ENCODE measurements at regions of chr18 and their contacts with region 1.

Region 1: GRCh38 chr18:62637807-62638687 is 77.3 kb upstream of the PHLPP1 start:
- DNase-seq: peak; percentile 23 to 81
- H3K4me3 ChIP-seq: no peak overlapping the region
- H3K27ac ChIP-seq: no peak overlapping the region
- H3K4me1 ChIP-seq: no peaks in the 10 kb centered on the region
- H3K27me3 ChIP-seq: no peaks in the 10 kb centered on the region
- CTCF ChIP-seq: peak; percentile 79 to 91 (median 88)
- EP300 ChIP-seq: no peak
- POLR2A ChIP-seq: no peak
- RAD21 ChIP-seq: peak; percentile 77 to 83

Region 2: DNA sequence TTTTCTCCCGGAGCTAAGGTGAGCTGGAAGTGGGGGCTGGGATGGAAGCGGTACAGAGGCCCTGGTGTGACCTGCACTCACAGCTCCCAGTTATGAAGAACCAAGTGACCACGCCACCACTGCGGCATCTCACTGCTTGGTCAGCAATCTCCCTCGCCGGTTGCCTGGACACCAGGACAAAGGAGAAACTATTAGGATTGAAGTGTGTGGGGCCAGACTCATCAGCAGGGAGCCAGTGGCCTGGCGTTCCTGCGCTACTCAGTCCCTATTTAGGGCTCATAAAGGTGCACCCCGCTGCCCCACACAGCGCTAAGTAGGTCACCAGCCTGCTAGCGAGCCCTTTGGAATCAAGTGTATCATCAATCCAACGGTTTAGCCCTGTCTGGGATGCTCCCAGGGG is 32.4 kb before region 1 on chr18:
- CTCF ChIA-PET with region 1: interaction called, 10 read pairs
- POLR2A ChIA-PET with region 1: no interaction called
- DNase-seq: no peak
- H3K4me3 ChIP-seq: no peak overlapping the region
- H3K27ac ChIP-seq: no peak overlapping the region
- H3K4me1 ChIP-seq: peaks cover 0 to 12% (median 8%) of the 10 kb centered on the region in 4 experiments; a peak in 4 of 7 replicates
- H3K27me3 ChIP-seq: no peaks in the 10 kb centered on the region
- CTCF ChIP-seq: no peak
- EP300 ChIP-seq: no peak
- POLR2A ChIP-seq: no peak
- RAD21 ChIP-seq: no peak

Region 3: GRCh38 chr18:62982600-62983251 is 344.7 kb after region 1 on chr18:
- CTCF ChIA-PET with region 1: interaction called, 16 read pairs
- POLR2A ChIA-PET with region 1: no interaction called
- DNase-seq: peak; percentile 33 to 74
- H3K4me3 ChIP-seq: no peak overlapping the region
- H3K27ac ChIP-seq: no peak overlapping the region
- H3K4me1 ChIP-seq: no peaks in the 10 kb centered on the region
- H3K27me3 ChIP-seq: no peaks in the 10 kb centered on the region
- CTCF ChIP-seq: peak; percentile 27 to 82 (median 77)
- EP300 ChIP-seq: no peak
- POLR2A ChIP-seq: no peak
- RAD21 ChIP-seq: peak; percentile 86 to 93

Region 4: GRCh38 chr18:63040788-63041410 is 402.9 kb after region 1 on chr18:
- CTCF ChIA-PET with region 1: no interaction called
- POLR2A ChIA-PET with region 1: no interaction called
- DNase-seq: no peak
- H3K4me3 ChIP-seq: no peak overlapping the region
- H3K27ac ChIP-seq: no peak overlapping the region
- H3K4me1 ChIP-seq: no peaks in the 10 kb centered on the region; a peak in 1 of 7 replicates
- H3K27me3 ChIP-seq: no peaks in the 10 kb centered on the region
- CTCF ChIP-seq: no peak
- EP300 ChIP-seq: no peak
- POLR2A ChIP-seq: no peak
- RAD21 ChIP-seq: no peak

Measured in H1 (cell line).